ENCODE measurements at regions of chrX and their contacts with region 1.

Region 1: DNA sequence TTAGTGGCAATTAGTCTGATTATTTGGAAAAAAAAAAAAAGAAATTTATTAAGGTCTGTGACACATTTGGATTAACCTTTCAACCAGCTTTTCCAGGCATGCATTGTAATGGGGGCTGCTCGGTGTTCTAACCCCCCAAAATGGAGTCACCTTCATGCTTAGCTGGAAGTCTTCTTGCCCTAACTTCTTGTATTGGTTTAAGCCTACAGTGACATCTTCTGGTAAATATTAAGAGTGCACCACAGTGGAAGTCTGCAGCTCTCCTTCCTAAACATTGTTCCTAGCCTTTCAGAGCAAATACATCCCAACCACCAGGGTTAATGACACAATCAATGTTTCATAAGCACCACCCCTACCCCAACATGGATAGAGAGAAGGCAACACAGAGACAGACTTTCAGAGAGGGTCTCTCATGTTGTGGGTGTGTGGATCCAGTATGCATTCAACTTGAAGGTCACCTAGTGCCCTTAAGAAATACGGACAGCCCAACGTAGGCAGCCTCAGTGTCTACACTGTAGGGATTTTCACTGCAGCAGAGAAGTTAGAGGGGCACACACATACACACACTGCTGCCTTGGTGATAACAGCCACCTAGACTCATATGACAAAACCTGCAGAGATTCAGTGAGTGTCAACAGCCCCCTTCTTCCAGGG is 142.9 kb upstream of the MBNL3 start:
- DNase-seq: peak; percentile 54
- H3K4me3 Mint-ChIP-seq: no peak overlapping the region
- H3K27ac Mint-ChIP-seq: no peak overlapping the region
- H3K4me1 Mint-ChIP-seq: no peaks in the 10 kb centered on the region
- H3K27me3 Mint-ChIP-seq: no peaks in the 10 kb centered on the region

Region 2: DNA sequence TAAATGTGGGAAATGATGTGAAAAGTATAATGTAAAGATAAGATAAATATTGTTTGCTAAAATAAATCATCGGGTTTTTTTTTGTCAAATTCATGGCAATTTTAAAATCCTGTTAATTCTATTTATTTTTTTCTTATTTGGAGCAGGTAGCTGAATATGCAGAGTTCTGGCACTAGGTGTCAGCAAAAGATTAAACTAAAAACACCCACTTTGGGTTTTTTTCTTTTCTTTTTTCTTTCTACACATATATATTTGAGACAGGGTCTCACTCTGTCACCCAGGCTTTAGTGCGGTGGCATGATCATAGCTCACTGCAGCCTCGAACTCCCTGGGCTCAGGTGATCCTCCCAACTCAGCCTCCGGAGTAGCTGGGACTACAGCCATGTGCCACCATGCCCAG is 405.5 kb before region 1 on chrX:
- intact Hi-C with region 1: loop called (anchors 5 kb)
- DNase-seq: no peak
- H3K4me3 Mint-ChIP-seq: no peak overlapping the region
- H3K27ac Mint-ChIP-seq: no peak overlapping the region
- H3K4me1 Mint-ChIP-seq: peaks cover 5% of the 10 kb centered on the region
- H3K27me3 Mint-ChIP-seq: no peaks in the 10 kb centered on the region

Region 3: DNA sequence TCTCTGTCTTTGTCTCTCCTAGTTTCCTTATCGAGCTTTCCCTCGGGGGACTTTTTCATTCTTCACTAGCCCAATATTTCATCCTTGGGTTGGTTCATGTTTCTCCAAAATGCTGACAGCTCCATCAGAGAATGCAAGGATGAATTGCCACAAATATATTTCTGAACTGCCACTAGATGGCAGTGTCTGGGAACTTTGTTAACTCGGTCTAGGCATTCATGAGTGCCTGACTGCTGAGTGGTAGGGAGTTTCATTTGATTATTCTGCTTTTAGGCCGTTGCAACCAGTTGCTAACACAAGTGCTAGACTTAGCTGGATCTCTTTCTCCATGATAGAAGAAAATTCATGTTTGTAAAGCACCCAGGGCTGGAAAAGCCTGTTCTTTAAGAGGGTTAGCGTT is 338.9 kb before region 1 on chrX:
- intact Hi-C with region 1: loop called (anchors 2 kb)
- DNase-seq: peak; percentile 67
- H3K4me3 Mint-ChIP-seq: no peak overlapping the region
- H3K27ac Mint-ChIP-seq: no peak overlapping the region
- H3K4me1 Mint-ChIP-seq: no peaks in the 10 kb centered on the region
- H3K27me3 Mint-ChIP-seq: peaks cover under 1% of the 10 kb centered on the region

Region 4: GRCh38 chrX:132795181-132795580 is 163.5 kb after region 1 on chrX:
- intact Hi-C with region 1: no loop called
- DNase-seq: no peak
- H3K4me3 Mint-ChIP-seq: no peak overlapping the region
- H3K27ac Mint-ChIP-seq: no peak overlapping the region
- H3K4me1 Mint-ChIP-seq: no peaks in the 10 kb centered on the region
- H3K27me3 Mint-ChIP-seq: no peaks in the 10 kb centered on the region